Activated CD4-positive, alpha-beta T cell treated with anti-CD3 and anti-CD28 coated beads for 36 hours (primary cell): ENCODE measurements at regions of chr2 and their contacts with region 1.

Region 1: DNA sequence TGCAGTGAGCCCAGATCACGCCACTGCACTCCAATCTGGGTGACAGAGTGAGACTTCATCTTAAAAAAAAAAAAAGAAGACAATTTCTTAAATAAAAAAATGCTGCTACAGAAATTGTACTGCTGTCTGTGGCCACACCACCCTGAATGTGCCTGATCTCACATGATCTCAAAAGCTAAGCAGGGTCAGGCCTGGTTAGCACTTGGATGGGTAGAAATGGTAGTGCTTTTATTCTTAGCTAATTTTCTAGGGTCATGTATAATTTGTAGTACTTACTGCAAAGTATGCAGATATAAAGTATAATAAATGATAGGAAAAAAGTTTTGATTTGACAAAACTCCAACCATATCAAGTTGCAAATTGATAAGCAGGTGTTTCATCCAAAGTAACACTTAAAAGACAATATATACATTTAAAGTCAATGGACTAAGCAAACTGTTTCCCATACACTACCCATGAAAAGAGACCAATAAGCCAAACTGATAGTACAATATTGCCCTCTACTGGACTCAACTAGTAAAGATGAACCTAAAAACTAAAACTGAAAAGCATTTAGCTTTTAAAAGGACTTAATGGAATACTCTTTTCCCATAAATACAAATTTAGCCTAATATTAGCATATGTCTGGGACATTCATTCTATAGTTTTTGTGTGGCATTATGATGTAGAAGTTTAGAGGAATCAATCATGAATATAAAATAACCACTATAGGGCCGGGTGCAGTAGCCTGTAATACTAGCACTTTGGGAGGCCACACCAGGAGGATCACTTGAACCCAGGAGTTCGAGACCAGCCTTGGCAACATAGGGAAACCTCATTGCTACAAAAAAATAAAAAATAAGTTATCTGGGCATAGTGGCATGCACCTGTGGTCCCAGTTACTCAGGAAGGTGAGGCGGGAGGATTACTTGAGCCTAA is 18.6 kb upstream of the PEX13 start:
- DNase-seq: no peak
- ATAC-seq: peak; percentile 77
- H3K4me3 Mint-ChIP-seq: no peak overlapping the region
- H3K27ac Mint-ChIP-seq: no peak overlapping the region
- H3K4me1 Mint-ChIP-seq: no peaks in the 10 kb centered on the region
- H3K27me3 Mint-ChIP-seq: no peaks in the 10 kb centered on the region

Region 2: GRCh38 chr2:60560734-60561644 is 437.9 kb before region 1 on chr2:
- CTCF ChIA-PET with region 1: no interaction called
- POLR2A ChIA-PET with region 1: no interaction called
- intact Hi-C with region 1: loop called in 1 of 2 experiments (anchors 2 kb)
- DNase-seq: no peak
- ATAC-seq: peak; percentile 72
- H3K4me3 Mint-ChIP-seq: no peak overlapping the region
- H3K27ac Mint-ChIP-seq: no peak overlapping the region
- H3K4me1 Mint-ChIP-seq: peaks cover 14% of the 10 kb centered on the region
- H3K27me3 Mint-ChIP-seq: peaks cover 44% of the 10 kb centered on the region

Region 3: DNA sequence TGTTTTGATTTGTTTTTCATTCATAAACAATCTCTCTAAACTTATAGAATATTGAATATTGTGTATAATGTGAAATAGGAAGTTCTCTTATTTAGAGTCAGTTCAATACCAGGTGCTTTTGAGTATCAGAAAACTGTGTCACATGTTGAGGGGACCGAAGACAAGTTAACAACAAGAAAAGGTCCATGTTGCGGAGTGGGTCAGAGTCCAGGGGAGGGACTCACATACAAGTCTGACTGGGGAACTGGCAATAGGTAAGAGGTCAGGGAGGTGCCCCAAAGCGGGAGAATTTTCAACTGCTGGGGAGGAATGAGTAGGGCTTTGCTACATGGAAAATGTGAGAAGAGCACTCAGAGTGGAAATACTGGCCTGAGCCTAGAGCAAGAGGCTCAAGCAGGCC is 425.6 kb before region 1 on chr2:
- CTCF ChIA-PET with region 1: no interaction called
- POLR2A ChIA-PET with region 1: no interaction called
- intact Hi-C with region 1: no loop called
- DNase-seq: no peak
- ATAC-seq: no peak
- H3K4me3 Mint-ChIP-seq: no peak overlapping the region
- H3K27ac Mint-ChIP-seq: no peak overlapping the region
- H3K4me1 Mint-ChIP-seq: no peaks in the 10 kb centered on the region
- H3K27me3 Mint-ChIP-seq: peaks cover 13% of the 10 kb centered on the region

Region 4: DNA sequence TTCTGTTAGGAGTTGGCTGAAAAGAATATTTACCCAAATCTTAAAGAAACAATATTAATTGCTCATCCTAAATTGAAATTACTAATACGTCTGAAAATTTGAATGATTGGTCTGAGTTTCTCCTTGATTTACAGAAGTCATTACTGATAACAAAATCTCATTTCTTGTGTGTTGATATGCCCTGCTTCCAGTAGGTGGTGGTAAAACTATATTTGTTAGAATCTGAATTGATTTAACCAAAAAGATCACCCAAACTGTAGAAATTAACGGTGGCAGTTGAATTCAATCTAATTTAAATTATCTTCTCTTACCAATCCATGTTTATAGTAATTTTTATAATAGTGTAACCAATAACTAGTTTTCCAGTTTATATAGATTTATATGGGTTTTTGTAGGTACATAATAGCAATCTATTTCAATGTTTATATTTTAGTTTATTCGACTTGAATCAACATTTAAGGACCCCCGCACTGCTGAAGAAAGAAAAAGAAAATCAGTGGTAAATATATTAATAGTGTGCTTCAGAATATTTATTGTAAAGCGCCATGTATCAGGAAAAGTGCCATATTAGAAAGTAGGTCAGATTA is 204.5 kb before region 1 on chr2:
- CTCF ChIA-PET with region 1: interaction called, 30 read pairs
- POLR2A ChIA-PET with region 1: interaction called, 4 read pairs
- intact Hi-C with region 1: loop called (anchors 1 kb)
- DNase-seq: no peak
- ATAC-seq: peak; percentile 51
- H3K4me3 Mint-ChIP-seq: no peak overlapping the region
- H3K27ac Mint-ChIP-seq: no peak overlapping the region
- H3K4me1 Mint-ChIP-seq: peaks cover 17% of the 10 kb centered on the region
- H3K27me3 Mint-ChIP-seq: no peaks in the 10 kb centered on the region

Region 5: GRCh38 chr2:60806988-60807681 is 191.8 kb before region 1 on chr2:
- CTCF ChIA-PET with region 1: interaction called, 51 read pairs
- POLR2A ChIA-PET with region 1: interaction called, 6 read pairs
- intact Hi-C with region 1: loop called (anchors 1 kb)
- DNase-seq: peak; percentile 83
- ATAC-seq: peak; percentile 92
- H3K4me3 Mint-ChIP-seq: peak overlapping the region; percentile 41
- H3K27ac Mint-ChIP-seq: peak overlapping the region; percentile 86
- H3K4me1 Mint-ChIP-seq: peaks cover 53% of the 10 kb centered on the region
- H3K27me3 Mint-ChIP-seq: no peaks in the 10 kb centered on the region

Region 6: GRCh38 chr2:60964651-60965498 is 34.0 kb before region 1 on chr2:
- CTCF ChIA-PET with region 1: interaction called, 13 read pairs
- POLR2A ChIA-PET with region 1: no interaction called
- intact Hi-C with region 1: no loop called
- DNase-seq: no peak
- ATAC-seq: no peak
- H3K4me3 Mint-ChIP-seq: no peak overlapping the region
- H3K27ac Mint-ChIP-seq: peak overlapping the region; percentile 42
- H3K4me1 Mint-ChIP-seq: peaks cover 38% of the 10 kb centered on the region
- H3K27me3 Mint-ChIP-seq: no peaks in the 10 kb centered on the region

Region 7: GRCh38 chr2:61185329-61185728 is 186.4 kb after region 1 on chr2:
- CTCF ChIA-PET with region 1: no interaction called
- POLR2A ChIA-PET with region 1: no interaction called
- intact Hi-C with region 1: no loop called
- DNase-seq: no peak
- ATAC-seq: no peak
- H3K4me3 Mint-ChIP-seq: no peak overlapping the region
- H3K27ac Mint-ChIP-seq: peak overlapping the region; percentile 38
- H3K4me1 Mint-ChIP-seq: peaks cover 42% of the 10 kb centered on the region
- H3K27me3 Mint-ChIP-seq: no peaks in the 10 kb centered on the region

Region 8: DNA sequence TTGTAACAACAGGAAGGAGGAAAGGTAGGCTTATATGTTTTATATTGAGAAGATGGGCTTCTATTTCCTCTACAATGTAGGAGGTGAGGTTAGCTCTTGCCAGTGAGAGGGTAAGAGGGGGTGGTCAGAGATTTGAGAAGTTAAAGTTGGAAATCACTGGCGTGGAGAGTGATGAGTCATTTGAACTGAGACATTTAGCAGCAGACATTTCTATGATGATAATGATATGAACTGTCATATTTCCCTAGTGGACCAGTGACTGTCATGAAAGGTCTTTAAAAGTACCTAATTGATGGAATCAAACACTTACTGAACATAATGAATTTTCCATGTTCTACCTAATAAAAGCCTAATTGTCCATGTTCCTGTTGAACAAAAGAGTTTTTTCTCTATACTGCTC is 728.9 kb after region 1 on chr2:
- CTCF ChIA-PET with region 1: no interaction called
- POLR2A ChIA-PET with region 1: no interaction called
- intact Hi-C with region 1: no loop called
- DNase-seq: no peak
- ATAC-seq: peak; percentile 64
- H3K4me3 Mint-ChIP-seq: no peak overlapping the region
- H3K27ac Mint-ChIP-seq: no peak overlapping the region
- H3K4me1 Mint-ChIP-seq: peaks cover 10% of the 10 kb centered on the region
- H3K27me3 Mint-ChIP-seq: peaks cover 1% of the 10 kb centered on the region